Right ventricle myocardium inferior (tissue), 1 donor: ENCODE measurements at regions of chr18 and their contacts with region 1.

Region 1: DNA sequence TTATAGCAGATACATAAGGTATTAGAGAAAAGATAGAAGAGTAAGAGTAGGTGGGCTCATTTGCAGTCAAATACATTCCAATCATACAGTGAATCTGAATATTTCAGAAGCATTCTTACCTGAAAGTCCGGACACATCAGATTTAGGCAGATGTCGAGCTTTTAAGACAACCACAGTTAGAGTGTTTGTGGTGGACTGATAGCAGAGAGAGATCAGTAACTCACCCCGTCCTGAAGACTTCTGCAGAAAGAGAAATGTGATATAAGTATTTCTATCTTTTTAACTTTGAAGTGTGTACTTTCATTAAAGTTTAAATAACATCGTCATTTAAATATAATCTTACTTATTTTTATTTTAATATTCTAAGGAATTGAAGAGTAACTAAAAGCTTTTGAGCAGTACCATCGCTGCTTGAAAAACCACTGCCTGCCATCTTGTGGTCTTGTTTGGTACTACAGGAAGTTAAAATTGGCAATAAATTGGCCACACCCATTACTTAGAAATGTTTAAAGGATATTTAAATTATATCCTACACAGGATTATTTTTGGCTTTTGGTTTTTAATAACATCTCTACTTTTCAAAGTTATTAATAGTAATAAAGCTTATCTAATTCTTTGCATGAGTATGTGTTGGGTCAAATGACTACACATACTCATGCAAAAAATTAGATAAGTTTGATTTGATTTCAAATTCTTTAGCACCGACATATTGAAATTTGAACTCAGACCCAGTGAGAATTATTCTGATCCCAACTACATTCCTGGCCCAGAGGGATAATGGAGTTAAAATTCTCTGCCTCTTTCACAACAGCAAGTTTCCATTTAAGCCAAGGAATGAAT is 5.5 kb downstream of the SYT4 start:
- DNase-seq: no peak
- ATAC-seq: no peak

Region 2: DNA sequence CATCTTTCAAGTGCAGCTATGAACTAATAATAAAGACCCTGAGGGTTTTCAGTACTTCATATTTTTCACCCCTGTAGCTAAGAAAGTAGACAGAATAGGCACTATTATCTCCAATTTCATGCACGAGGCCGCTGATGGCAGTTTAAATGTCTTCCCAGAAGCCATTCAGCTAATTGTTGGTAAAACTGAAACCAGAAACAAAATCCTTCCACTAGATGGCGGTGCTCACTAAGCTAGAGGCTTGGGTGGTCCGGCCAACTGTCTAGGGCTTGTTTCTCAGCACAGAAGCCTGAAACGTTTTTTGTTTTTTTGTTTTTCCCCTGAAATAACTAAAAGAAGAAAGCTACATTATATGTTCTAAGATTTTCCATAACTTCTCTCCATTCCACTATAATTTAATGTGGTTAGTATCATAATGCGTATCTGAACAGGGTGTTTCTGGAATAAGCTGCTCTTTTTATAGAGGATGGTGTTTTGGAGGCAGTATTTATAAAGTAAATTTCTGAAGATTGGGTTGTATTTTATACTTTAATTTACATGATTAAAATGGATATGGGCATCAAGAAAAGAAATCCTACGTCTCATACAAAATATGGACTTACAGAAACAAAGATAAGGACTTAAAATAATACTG is 1157.4 kb before region 1 on chr18:
- intact Hi-C with region 1: loop called (anchors 5 kb)
- DNase-seq: peak; percentile 53
- ATAC-seq: peak; percentile 65

Region 3: GRCh38 chr18:42298759-42299675 is 972.8 kb before region 1 on chr18:
- intact Hi-C with region 1: loop called (anchors 10 kb)
- DNase-seq: peak; percentile 75
- ATAC-seq: peak; percentile 88

Region 4: DNA sequence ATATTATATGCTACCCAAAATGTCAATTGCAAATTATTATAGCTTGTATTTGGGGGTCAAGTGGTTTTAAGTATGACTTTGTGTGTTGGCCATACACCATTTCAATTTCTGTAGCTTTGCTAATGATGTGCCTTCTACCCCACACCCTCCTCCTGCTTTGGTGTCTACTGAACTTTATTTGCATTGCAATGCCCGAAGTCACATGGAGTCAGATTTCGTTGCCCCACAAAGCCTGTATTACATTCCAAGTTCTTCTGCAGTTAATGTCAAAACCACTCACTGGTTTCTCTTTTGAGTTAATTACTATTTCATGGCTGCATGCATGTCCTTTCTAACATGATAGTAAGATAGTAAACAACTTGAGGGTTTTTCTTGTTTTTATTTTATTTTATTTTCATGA is 685.2 kb before region 1 on chr18:
- intact Hi-C with region 1: loop called (anchors 10 kb)
- DNase-seq: no peak
- ATAC-seq: no peak